CD14-positive monocyte (primary cell): ENCODE measurements at regions of chr9 and their contacts with region 1.

Region 1: DNA sequence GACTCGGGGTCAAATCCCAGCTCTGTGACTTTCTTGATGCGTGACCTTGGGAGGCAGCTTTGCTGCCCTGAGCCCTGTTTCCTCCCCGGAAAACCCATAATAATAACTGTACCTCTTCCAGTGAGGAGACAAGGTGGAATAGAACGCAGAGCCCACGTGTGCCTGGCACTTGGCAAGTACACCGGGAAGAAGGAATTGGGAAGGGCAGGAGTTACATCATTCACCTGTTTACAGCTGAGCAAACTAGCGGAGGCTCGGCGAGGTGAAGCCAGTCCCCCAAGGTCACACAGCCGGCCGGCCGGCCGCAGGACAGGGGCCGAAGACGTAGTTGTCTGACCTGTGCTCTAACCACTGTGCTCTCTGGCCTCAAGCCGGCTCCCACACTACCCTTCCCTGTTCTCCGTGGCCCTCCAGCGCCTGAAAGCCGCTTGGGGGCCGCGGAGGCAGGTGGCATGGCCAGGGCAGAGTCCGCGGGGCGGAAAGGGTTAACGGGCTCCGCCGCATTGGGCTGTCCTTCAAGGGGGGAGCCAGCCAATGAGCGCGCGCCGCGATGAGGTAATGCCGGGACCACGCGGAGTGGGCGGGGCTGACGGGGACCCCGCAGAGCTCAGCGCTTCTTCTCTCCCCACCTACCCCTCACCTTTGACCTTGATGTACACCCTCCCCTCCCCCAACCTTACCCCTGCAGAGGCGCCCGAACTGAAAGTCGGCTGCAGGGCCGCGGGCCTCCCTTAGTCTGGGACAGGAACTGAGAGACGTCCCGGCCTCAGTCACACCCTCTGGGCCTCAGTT is 125.2 kb downstream of the C9orf50 start:
- DNase-seq: peak; percentile 66 to 83 (median 76)
- H3K4me3 ChIP-seq: peak overlapping the region; percentile 66 to 96 (median 86)
- H3K4me3 Mint-ChIP-seq: peak overlapping the region; percentile 90 to 91
- H3K27ac ChIP-seq: peak overlapping the region; percentile 69 to 91
- H3K27ac Mint-ChIP-seq: peak overlapping the region; percentile 85 to 98 (median 93)
- H3K4me1 ChIP-seq: peaks cover 43 to 50% of the 10 kb centered on the region in 2 donors
- H3K4me1 Mint-ChIP-seq: peaks cover 51% of the 10 kb centered on the region
- H3K27me3 ChIP-seq: no peaks in the 10 kb centered on the region
- H3K27me3 Mint-ChIP-seq: peaks cover 2 to 13% (median 4%) of the 10 kb centered on the region in 3 donors
- CTCF ChIP-seq: no peak

Region 2: GRCh38 chr9:129446828-129447550 is 48.7 kb before region 1 on chr9:
- intact Hi-C with region 1: loop called in 1 of 2 experiments (anchors 10 kb)
- DNase-seq: no peak
- H3K4me3 ChIP-seq: no peak overlapping the region
- H3K4me3 Mint-ChIP-seq: no peak overlapping the region
- H3K27ac ChIP-seq: no peak overlapping the region
- H3K27ac Mint-ChIP-seq: peak overlapping the region in 1 of 7 donors; percentile 26
- H3K4me1 ChIP-seq: no peaks in the 10 kb centered on the region
- H3K4me1 Mint-ChIP-seq: no peaks in the 10 kb centered on the region
- H3K27me3 ChIP-seq: no peaks in the 10 kb centered on the region
- H3K27me3 Mint-ChIP-seq: peaks cover 8 to 13% (median 10%) of the 10 kb centered on the region in 3 donors
- CTCF ChIP-seq: no peak

Region 3: GRCh38 chr9:129569502-129570449 is 74.0 kb after region 1 on chr9:
- intact Hi-C with region 1: loop called in 1 of 2 experiments (anchors 10 kb)
- DNase-seq: peak in 2 of 3 donors; percentile 26 to 36
- H3K4me3 ChIP-seq: no peak overlapping the region
- H3K4me3 Mint-ChIP-seq: peak overlapping the region; percentile 55 to 88
- H3K27ac ChIP-seq: no peak overlapping the region
- H3K27ac Mint-ChIP-seq: peak overlapping the region in 3 of 7 donors; percentile 4 to 70 (median 57)
- H3K4me1 ChIP-seq: peaks cover 31 to 39% of the 10 kb centered on the region in 2 donors
- H3K4me1 Mint-ChIP-seq: peaks cover 30% of the 10 kb centered on the region
- H3K27me3 ChIP-seq: peaks cover 8 to 29% of the 10 kb centered on the region in 2 donors
- H3K27me3 Mint-ChIP-seq: peaks cover 30 to 43% (median 30%) of the 10 kb centered on the region in 3 donors
- CTCF ChIP-seq: peak; percentile 26

Region 4: DNA sequence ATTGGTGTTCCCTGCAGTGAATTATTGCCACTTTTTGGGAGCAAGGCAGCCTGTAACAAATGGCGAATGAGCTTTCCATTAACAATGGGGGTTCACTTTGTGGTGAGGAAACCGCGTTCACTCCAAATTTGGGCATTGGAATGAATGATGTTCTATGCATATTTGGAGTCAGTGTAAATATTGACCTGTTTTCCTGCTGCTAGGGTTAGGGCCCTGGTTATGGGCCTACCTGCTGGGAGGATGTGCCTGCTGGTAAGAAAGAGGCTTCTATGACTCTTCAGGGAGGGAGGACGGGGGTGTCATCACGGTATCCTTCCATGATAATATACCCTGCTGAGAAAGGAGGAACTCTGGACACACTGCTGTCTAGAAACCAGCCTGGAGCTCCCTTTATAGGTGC is 96.2 kb after region 1 on chr9:
- intact Hi-C with region 1: no loop called
- DNase-seq: no peak
- H3K4me3 ChIP-seq: no peak overlapping the region
- H3K4me3 Mint-ChIP-seq: no peak overlapping the region
- H3K27ac ChIP-seq: no peak overlapping the region
- H3K27ac Mint-ChIP-seq: peak overlapping the region in 1 of 7 donors; percentile 21
- H3K4me1 ChIP-seq: peaks cover 37 to 41% of the 10 kb centered on the region in 2 donors
- H3K4me1 Mint-ChIP-seq: peaks cover 42% of the 10 kb centered on the region
- H3K27me3 ChIP-seq: no peaks in the 10 kb centered on the region
- H3K27me3 Mint-ChIP-seq: peaks cover 7 to 17% (median 13%) of the 10 kb centered on the region in 3 donors
- CTCF ChIP-seq: no peak